ENCODE measurements at regions of chr2 and their contacts with region 1.

Region 1: DNA sequence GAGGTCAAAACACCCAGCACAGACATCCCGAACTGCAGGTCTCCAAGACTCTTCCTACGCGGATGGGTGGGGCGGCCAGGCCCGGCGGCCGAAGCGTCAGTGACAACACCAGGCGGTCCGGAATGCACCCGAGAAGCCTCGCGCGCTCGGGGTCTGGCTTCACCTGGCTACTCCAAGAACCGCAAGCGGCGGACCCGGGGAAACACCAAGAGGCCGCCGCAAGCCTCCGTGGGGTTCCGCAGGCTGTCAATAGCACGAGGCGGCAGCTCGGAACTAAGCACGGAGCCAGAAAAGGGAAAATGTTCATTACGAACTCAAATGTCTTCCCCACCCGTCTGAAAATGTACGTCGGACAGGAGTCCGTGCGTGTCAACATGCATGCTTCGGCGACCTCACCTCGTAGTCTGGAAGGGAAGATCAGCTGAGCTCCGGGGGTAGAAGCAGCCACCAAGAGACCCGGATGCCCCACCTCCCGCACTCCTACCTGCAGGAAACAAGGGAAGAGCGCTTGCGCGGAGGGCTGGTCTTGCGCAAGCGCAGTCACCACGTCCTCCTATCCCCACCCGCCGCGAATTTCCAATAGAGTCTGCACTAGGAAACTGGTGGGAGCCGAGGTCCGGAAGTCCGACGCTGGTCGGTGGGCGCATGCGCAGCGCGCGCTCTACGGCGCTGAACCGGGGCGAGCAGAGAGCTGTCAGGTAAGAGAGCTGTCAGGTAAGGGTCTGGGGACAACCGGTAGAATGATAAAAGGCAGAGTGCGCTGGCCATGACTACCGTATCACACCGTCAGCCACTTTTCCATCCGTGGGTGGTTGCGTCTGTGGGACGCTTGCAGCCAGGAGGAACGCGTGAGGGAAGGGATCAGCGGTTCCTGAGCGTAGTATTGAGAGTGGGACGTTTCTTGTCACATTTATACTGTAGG is at the starts of genes GPATCH11 and HEATR5B:
- DNase-seq: peak; percentile 83
- ATAC-seq: peak; percentile 83
- H3K4me3 Mint-ChIP-seq: no peak within 1 kb of the TSS
- H3K27ac Mint-ChIP-seq: no peak within 1 kb of the TSS
- H3K4me1 Mint-ChIP-seq: peaks cover 23% of the 10 kb centered on the region
- H3K27me3 Mint-ChIP-seq: no peaks in the 10 kb centered on the region
- CTCF ChIP-seq: no peak
- total RNA-seq, gene GPATCH11: 30.7 and 32.9 TPM in 2 replicates
- total RNA-seq, gene HEATR5B: 42.6 and 50.3 TPM in 2 replicates

Region 2: GRCh38 chr2:37013315-37013641 is 70.9 kb before region 1 on chr2:
- CTCF ChIA-PET with region 1: no interaction called
- POLR2A ChIA-PET with region 1: interaction called, 5 read pairs
- intact Hi-C with region 1: loop called (anchors 5 kb)
- DNase-seq: no peak
- ATAC-seq: peak; percentile 31
- H3K4me3 Mint-ChIP-seq: no peak overlapping the region
- H3K27ac Mint-ChIP-seq: peak overlapping the region; percentile 80
- H3K4me1 Mint-ChIP-seq: peaks cover 44% of the 10 kb centered on the region
- H3K27me3 Mint-ChIP-seq: no peaks in the 10 kb centered on the region
- CTCF ChIP-seq: no peak

Region 3: GRCh38 chr2:37096568-37096967 is 12.4 kb after region 1 on chr2:
- CTCF ChIA-PET with region 1: no interaction called
- POLR2A ChIA-PET with region 1: interaction called, 13 read pairs
- intact Hi-C with region 1: loop called (anchors 1 kb)
- DNase-seq: no peak
- ATAC-seq: peak; percentile 47
- H3K4me3 Mint-ChIP-seq: no peak overlapping the region
- H3K27ac Mint-ChIP-seq: peak overlapping the region; percentile 76
- H3K4me1 Mint-ChIP-seq: peaks cover 47% of the 10 kb centered on the region
- H3K27me3 Mint-ChIP-seq: no peaks in the 10 kb centered on the region
- CTCF ChIP-seq: no peak

Region 4: DNA sequence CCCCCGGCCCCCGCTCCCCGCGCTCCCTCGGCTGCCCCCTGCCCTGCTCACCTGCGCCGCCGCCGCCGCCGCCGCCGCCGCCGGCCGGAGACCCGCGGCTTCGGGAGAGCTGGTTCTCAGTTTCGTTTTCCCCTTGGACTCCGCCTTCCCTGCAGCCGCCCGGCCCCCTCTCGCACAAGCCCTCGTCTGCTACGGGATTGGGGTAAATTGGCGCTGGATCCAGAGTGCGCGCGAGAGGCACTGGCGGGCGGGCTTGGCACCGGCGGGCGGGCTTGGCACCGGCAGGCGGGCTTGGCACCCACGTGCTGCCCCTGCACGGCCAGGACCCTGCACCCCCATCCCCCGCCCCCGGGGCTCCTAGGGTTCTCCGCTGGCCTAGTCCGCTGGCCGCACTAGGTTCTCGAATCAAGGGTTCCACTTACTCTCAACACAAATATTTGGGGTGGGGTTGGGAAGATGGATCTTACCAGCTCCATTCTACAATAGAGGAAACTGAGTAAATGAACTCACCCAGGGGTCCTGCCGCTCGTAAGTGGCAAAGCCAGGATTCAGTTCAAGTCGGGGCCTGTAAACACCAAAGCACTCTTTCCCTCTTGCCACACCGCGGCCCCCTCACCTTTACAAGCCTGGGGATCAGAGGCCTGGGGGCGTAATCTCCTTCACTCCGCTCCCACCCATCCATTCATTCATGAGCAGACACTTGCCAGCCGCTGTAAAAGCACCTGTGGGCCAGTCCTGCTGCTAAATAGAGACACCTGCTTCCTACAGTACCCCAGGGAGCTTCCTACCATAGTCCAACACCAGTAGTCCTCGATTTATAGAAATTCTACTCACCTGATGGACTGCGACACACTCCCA is 73.0 kb after region 1 on chr2 and contains the start of gene EIF2AK2:
- CTCF ChIA-PET with region 1: no interaction called
- POLR2A ChIA-PET with region 1: no interaction called
- intact Hi-C with region 1: loop called (anchors 5 kb)
- DNase-seq: peak; percentile 70
- ATAC-seq: peak; percentile 92
- H3K4me3 Mint-ChIP-seq: peak within 1 kb of the TSS; percentile 89
- H3K27ac Mint-ChIP-seq: peak within 1 kb of the TSS; percentile 86
- H3K4me1 Mint-ChIP-seq: peaks cover 40% of the 10 kb centered on the region
- H3K27me3 Mint-ChIP-seq: no peaks in the 10 kb centered on the region
- CTCF ChIP-seq: no peak
- total RNA-seq, gene EIF2AK2: 37.0 and 39.9 TPM in 2 replicates

Region 5: DNA sequence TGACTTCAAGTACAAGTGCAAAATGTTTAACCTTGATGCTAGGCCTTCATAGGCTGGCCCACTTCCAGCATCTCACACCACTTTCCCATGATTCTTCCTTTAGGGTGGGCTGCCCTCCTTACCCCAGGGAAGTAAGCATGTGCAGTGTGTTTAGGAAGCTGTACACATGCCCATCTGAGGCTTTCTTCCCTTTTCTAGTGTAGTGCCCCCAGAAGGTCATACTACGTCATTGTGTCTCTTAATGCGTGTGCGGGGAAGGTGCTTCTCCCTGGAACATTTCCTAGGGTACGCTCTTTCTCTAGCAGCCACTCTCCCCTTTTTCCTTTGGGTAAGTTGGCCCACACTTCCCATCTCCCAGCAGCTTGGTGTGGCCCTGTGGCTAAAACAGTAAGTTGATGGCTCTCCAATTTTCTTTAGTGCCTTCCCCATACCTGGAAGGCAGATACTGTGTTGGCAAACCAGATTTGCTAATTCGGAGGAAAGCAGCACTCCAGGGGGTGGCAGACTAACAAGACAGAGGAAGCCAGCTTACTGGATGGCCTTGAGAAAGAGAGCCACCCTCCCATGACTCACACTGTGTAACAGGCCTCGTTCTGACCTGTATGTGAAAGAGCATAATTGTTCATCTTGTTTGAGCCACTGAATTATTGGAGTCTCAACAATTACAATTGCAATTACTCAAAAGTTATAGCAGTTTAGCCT is 105.5 kb after region 1 on chr2:
- CTCF ChIA-PET with region 1: no interaction called
- POLR2A ChIA-PET with region 1: no interaction called
- intact Hi-C with region 1: no loop called
- DNase-seq: no peak
- ATAC-seq: no peak
- H3K4me3 Mint-ChIP-seq: no peak overlapping the region
- H3K27ac Mint-ChIP-seq: no peak overlapping the region
- H3K4me1 Mint-ChIP-seq: no peaks in the 10 kb centered on the region
- H3K27me3 Mint-ChIP-seq: no peaks in the 10 kb centered on the region
- CTCF ChIP-seq: no peak

Region 6: DNA sequence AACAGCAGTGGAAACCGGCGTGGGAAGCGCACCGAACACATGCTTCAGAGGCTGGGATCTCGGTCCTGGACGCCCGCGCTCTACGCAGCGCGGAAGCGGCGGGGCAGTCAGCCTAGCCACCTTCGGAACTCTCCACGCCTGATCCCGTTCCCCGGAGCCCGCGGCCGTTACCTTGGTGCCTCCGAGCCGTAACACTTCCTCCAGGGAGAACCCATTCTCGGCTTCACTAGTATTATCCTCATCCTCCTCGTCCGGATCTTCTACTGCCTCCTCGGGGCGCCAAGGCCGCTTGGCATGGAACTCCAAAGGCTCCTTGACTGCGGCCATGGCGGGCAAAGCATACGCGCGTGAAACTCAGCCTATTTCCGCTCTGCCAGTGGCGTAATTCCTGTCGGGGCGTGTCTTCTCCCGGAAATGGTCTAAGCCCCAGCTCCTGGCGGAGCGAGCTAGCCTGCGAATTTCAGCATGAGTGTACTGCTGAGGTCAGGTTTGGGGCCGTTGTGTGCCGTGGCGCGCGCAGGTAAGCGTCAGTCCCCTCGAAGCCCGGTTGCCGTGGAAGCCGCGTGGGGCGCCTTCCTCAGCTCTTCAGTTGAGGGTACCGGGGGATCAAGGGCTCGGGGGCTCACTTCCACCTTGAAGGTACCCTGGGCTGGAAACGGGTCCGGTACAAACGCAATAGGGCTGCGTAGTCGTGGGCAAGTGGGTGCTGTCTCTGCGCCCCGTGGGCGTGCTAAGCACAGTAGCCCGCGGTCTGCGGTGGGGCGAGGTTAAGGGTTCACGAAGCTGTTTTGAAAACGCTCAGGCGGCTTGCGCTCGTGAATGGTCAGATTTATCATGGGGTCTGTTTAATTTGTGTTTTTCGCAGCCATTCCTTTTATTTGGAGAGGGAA is 147.4 kb after region 1 on chr2 and contains the starts of genes CEBPZ and NDUFAF7:
- CTCF ChIA-PET with region 1: no interaction called
- POLR2A ChIA-PET with region 1: interaction called, 4 read pairs
- intact Hi-C with region 1: loop called (anchors 2 kb)
- DNase-seq: peak; percentile 80
- ATAC-seq: peak; percentile 91
- H3K4me3 Mint-ChIP-seq: no peak within 1 kb of the TSS
- H3K27ac Mint-ChIP-seq: no peak within 1 kb of the TSS
- H3K4me1 Mint-ChIP-seq: peaks cover 16% of the 10 kb centered on the region
- H3K27me3 Mint-ChIP-seq: no peaks in the 10 kb centered on the region
- CTCF ChIP-seq: no peak
- total RNA-seq, gene CEBPZ: 55.2 and 57.0 TPM in 2 replicates
- total RNA-seq, gene NDUFAF7: 22.4 and 22.8 TPM in 2 replicates

Measured in activated B cell treated with CpG ODN at 0.5 μM for 24 hours (primary cell).